ENCODE measurements at regions of chr7 and their contacts with region 1.

Region 1: DNA sequence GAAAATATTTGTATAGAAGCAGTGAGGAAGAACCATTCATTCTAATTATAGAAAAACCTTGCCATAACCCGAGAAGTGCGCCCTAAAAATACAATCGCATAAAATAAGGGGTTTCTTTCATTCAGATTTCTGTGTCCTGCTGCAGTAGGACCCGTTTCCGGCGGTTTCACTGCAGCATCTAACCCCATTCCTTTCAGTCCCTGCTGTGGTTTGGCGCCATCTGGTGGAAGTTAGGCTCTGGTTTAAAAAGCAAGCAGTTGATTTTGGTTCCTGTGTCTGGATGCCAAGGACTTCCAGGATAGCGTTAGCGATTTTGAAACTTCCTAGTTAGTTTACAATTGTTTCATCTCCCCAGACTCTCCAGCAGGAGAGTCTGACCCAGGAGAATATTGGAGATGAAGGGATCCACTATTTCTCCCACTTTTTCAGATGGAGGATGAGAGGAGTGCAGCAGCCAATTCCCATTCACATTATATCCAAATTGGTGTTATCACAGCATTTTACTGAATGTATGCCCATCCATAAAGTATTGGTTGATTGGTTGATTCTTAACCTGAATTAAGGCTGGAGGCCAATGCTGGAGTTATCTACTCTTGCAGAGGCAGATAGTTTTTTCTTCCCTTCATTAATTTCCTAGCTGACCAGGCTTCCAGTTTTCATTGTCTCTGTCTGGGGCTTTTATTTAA is 128.8 kb upstream of the CACNA2D1 start:
- DNase-seq: peak; percentile 82
- H3K4me3 Mint-ChIP-seq: no peak overlapping the region
- H3K27ac Mint-ChIP-seq: no peak overlapping the region
- H3K4me1 Mint-ChIP-seq: no peaks in the 10 kb centered on the region
- H3K27me3 Mint-ChIP-seq: peaks cover 68% of the 10 kb centered on the region
- CTCF ChIP-seq: peak; percentile 74

Region 2: GRCh38 chr7:81482600-81483186 is 1089.6 kb before region 1 on chr7:
- CTCF ChIA-PET with region 1: interaction called, 8 read pairs
- POLR2A ChIA-PET with region 1: no interaction called
- intact Hi-C with region 1: loop called (anchors 5 kb)
- DNase-seq: peak; percentile 22
- H3K4me3 Mint-ChIP-seq: no peak overlapping the region
- H3K27ac Mint-ChIP-seq: no peak overlapping the region
- H3K4me1 Mint-ChIP-seq: no peaks in the 10 kb centered on the region
- H3K27me3 Mint-ChIP-seq: peaks cover 10% of the 10 kb centered on the region
- CTCF ChIP-seq: peak; percentile 63

Region 3: DNA sequence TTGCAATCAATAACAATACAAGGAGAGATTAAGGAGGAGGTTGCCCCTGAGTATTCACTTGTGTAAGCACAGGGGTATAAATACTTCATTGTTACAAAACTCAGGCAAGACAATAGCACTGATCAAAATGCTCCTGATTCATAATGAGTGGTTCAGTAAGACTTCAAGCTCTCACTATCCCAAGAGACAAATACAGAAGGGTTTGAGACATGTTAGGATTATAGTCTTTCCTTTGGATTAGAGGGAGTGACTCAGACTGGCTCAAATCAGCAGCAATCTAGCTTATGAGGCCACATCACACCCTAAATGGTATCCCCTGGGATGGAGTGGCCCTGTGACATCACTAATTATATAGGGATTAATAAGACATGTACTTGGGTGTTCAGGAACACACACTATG is 635.2 kb before region 1 on chr7:
- CTCF ChIA-PET with region 1: no interaction called
- POLR2A ChIA-PET with region 1: no interaction called
- intact Hi-C with region 1: no loop called
- DNase-seq: no peak
- H3K4me3 Mint-ChIP-seq: no peak overlapping the region
- H3K27ac Mint-ChIP-seq: no peak overlapping the region
- H3K4me1 Mint-ChIP-seq: no peaks in the 10 kb centered on the region
- H3K27me3 Mint-ChIP-seq: peaks cover 61% of the 10 kb centered on the region
- CTCF ChIP-seq: no peak

Region 4: GRCh38 chr7:82044497-82045080 is 527.7 kb before region 1 on chr7:
- CTCF ChIA-PET with region 1: interaction called, 29 read pairs
- POLR2A ChIA-PET with region 1: no interaction called
- intact Hi-C with region 1: loop called (anchors 1 kb)
- DNase-seq: peak; percentile 54
- H3K4me3 Mint-ChIP-seq: no peak overlapping the region
- H3K27ac Mint-ChIP-seq: no peak overlapping the region
- H3K4me1 Mint-ChIP-seq: no peaks in the 10 kb centered on the region
- H3K27me3 Mint-ChIP-seq: peaks cover 73% of the 10 kb centered on the region
- CTCF ChIP-seq: peak; percentile 66

Region 5: GRCh38 chr7:82172017-82172416 is 400.3 kb before region 1 on chr7:
- CTCF ChIA-PET with region 1: no interaction called
- POLR2A ChIA-PET with region 1: no interaction called
- intact Hi-C with region 1: loop called (anchors 1 kb)
- DNase-seq: no peak
- H3K4me3 Mint-ChIP-seq: no peak overlapping the region
- H3K27ac Mint-ChIP-seq: no peak overlapping the region
- H3K4me1 Mint-ChIP-seq: no peaks in the 10 kb centered on the region
- H3K27me3 Mint-ChIP-seq: peaks cover 50% of the 10 kb centered on the region
- CTCF ChIP-seq: peak; percentile 26

Region 6: GRCh38 chr7:82234457-82235049 is 337.8 kb before region 1 on chr7:
- CTCF ChIA-PET with region 1: interaction called, 4 read pairs
- POLR2A ChIA-PET with region 1: no interaction called
- intact Hi-C with region 1: loop called (anchors 1 kb)
- DNase-seq: peak; percentile 49
- H3K4me3 Mint-ChIP-seq: no peak overlapping the region
- H3K27ac Mint-ChIP-seq: no peak overlapping the region
- H3K4me1 Mint-ChIP-seq: no peaks in the 10 kb centered on the region
- H3K27me3 Mint-ChIP-seq: peaks cover 92% of the 10 kb centered on the region
- CTCF ChIP-seq: peak; percentile 36

Region 7: DNA sequence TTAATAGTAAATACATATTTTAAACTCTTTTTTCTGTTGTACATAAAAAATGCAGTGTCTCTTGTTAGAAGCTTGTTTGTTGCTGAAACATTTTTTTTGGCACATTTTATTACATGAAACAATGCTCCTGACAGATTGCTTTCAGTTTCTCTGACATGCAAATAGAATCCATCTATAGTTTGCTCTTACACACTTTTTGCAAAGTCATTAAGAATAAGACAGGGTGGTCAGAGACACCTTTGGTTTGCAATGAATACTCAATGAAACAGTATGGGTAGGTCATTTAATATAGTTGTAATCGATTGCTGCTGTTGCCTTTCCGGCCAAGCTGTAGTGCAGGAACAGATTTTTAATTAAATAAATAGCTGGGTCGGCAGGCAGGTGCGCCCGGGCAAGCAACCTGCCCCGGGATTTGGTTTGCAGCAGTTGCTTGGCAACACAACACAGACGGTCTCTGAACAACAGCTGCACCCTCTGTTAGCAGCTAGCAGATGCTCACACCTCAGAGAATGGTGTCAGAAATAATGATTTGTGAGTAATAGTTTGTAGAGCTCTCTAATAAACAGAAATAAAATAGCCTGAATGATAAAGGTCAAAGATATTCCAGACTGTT is 13.0 kb before region 1 on chr7:
- CTCF ChIA-PET with region 1: interaction called, 11 read pairs
- POLR2A ChIA-PET with region 1: no interaction called
- intact Hi-C with region 1: no loop called
- DNase-seq: no peak
- H3K4me3 Mint-ChIP-seq: no peak overlapping the region
- H3K27ac Mint-ChIP-seq: no peak overlapping the region
- H3K4me1 Mint-ChIP-seq: no peaks in the 10 kb centered on the region
- H3K27me3 Mint-ChIP-seq: peaks cover 39% of the 10 kb centered on the region
- CTCF ChIP-seq: no peak

Region 8: GRCh38 chr7:82631998-82632397 is 59.7 kb after region 1 on chr7:
- CTCF ChIA-PET with region 1: no interaction called
- POLR2A ChIA-PET with region 1: no interaction called
- intact Hi-C with region 1: no loop called
- DNase-seq: no peak
- H3K4me3 Mint-ChIP-seq: no peak overlapping the region
- H3K27ac Mint-ChIP-seq: no peak overlapping the region
- H3K4me1 Mint-ChIP-seq: no peaks in the 10 kb centered on the region
- H3K27me3 Mint-ChIP-seq: peaks cover 15% of the 10 kb centered on the region
- CTCF ChIP-seq: no peak

Region 9: GRCh38 chr7:82729172-82730030 is 157.1 kb after region 1 on chr7:
- CTCF ChIA-PET with region 1: interaction called, 3 read pairs
- POLR2A ChIA-PET with region 1: no interaction called
- intact Hi-C with region 1: loop called (anchors 2 kb)
- DNase-seq: peak; percentile 38
- H3K4me3 Mint-ChIP-seq: no peak overlapping the region
- H3K27ac Mint-ChIP-seq: no peak overlapping the region
- H3K4me1 Mint-ChIP-seq: no peaks in the 10 kb centered on the region
- H3K27me3 Mint-ChIP-seq: no peaks in the 10 kb centered on the region
- CTCF ChIP-seq: peak; percentile 68

Region 10: DNA sequence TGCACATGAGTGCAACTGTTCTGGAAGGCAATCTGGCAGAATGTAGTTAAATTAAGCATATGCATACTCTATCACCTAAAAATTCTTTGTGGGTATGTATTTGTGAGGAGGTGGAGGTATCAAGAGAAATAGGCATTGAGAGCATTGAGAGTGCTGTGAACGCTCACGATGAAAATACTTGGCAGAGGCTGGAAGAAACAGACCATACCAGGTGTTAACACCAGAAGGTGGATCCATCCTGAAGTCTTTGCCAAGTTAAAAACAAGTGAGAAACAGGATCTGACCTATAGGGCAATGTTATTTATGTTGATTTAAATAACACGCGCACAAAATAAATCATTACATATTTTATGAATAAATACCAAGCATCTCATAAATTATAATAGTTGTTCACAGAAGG is 278.8 kb after region 1 on chr7:
- CTCF ChIA-PET with region 1: no interaction called
- POLR2A ChIA-PET with region 1: no interaction called
- intact Hi-C with region 1: no loop called
- DNase-seq: no peak
- H3K4me3 Mint-ChIP-seq: no peak overlapping the region
- H3K27ac Mint-ChIP-seq: no peak overlapping the region
- H3K4me1 Mint-ChIP-seq: no peaks in the 10 kb centered on the region
- H3K27me3 Mint-ChIP-seq: no peaks in the 10 kb centered on the region
- CTCF ChIP-seq: no peak